HCT116 (cell line): ENCODE measurements at regions of chr5 and their contacts with region 1.

Region 1: GRCh38 chr5:149834246-149834855 is 104.2 kb downstream of the PPARGC1B start:
- DNase-seq: peak; percentile 74
- ATAC-seq: peak; percentile 65
- H3K4me3 ChIP-seq: no peak overlapping the region
- H3K27ac ChIP-seq: no peak overlapping the region
- H3K4me1 ChIP-seq: peaks cover 0 to 9% of the 10 kb centered on the region in 2 experiments; a peak in 2 of 4 replicates
- H3K27me3 ChIP-seq: no peaks in the 10 kb centered on the region
- CTCF ChIP-seq: peak; percentile 71 to 83 (median 78); a peak in 5 of 6 replicates
- POLR2A ChIP-seq: no peak
- RAD21 ChIP-seq: peak; percentile 83

Region 2: GRCh38 chr5:149636851-149637246 is 197.5 kb before region 1 on chr5:
- CTCF ChIA-PET with region 1: interaction called, 54 read pairs
- POLR2A ChIA-PET with region 1: no interaction called
- RAD21 ChIA-PET with region 1: interaction called in 1 of 2 experiments, 3 read pairs
- intact Hi-C with region 1: no loop called
- DNase-seq: peak; percentile 65
- ATAC-seq: peak; percentile 88
- H3K4me3 ChIP-seq: no peak overlapping the region
- H3K27ac ChIP-seq: no peak overlapping the region
- H3K4me1 ChIP-seq: peaks cover 16 to 35% of the 10 kb centered on the region in 2 experiments
- H3K27me3 ChIP-seq: no peaks in the 10 kb centered on the region
- CTCF ChIP-seq: peak; percentile 84 to 97 (median 94)
- POLR2A ChIP-seq: no peak
- RAD21 ChIP-seq: peak; percentile 100

Region 3: GRCh38 chr5:149960272-149961185 is 126.2 kb after region 1 on chr5 and contains the start of gene SLC26A2:
- CTCF ChIA-PET with region 1: interaction called, 26 read pairs
- POLR2A ChIA-PET with region 1: interaction called, 6 read pairs
- RAD21 ChIA-PET with region 1: interaction called, 4 to 5 read pairs
- intact Hi-C with region 1: loop called (anchors 1 kb)
- DNase-seq: peak; percentile 93
- ATAC-seq: peak; percentile 97
- H3K4me3 ChIP-seq: peak within 1 kb of the TSS; percentile 74
- H3K27ac ChIP-seq: peak within 1 kb of the TSS; percentile 52
- H3K4me1 ChIP-seq: peaks cover 8 to 27% of the 10 kb centered on the region in 2 experiments
- H3K27me3 ChIP-seq: no peaks in the 10 kb centered on the region
- CTCF ChIP-seq: no peak
- POLR2A ChIP-seq: peak; percentile 84
- RAD21 ChIP-seq: no peak
- total RNA-seq, gene SLC26A2: 7.8 TPM

Region 4: GRCh38 chr5:150122158-150122510 is 287.8 kb after region 1 on chr5:
- CTCF ChIA-PET with region 1: interaction called, 4 read pairs
- POLR2A ChIA-PET with region 1: no interaction called
- RAD21 ChIA-PET with region 1: no interaction called
- intact Hi-C with region 1: loop called (anchors 2 kb)
- DNase-seq: no peak
- ATAC-seq: peak; percentile 96
- H3K4me3 ChIP-seq: no peak overlapping the region
- H3K27ac ChIP-seq: no peak overlapping the region
- H3K4me1 ChIP-seq: peaks cover 4 to 10% of the 10 kb centered on the region in 2 experiments; a peak in 3 of 4 replicates
- H3K27me3 ChIP-seq: no peaks in the 10 kb centered on the region
- CTCF ChIP-seq: peak; percentile 58 to 68 (median 63); a peak in 5 of 6 replicates
- POLR2A ChIP-seq: no peak
- RAD21 ChIP-seq: peak; percentile 66

Region 5: GRCh38 chr5:150398722-150399523 is 564.6 kb after region 1 on chr5:
- CTCF ChIA-PET with region 1: no interaction called
- POLR2A ChIA-PET with region 1: no interaction called
- RAD21 ChIA-PET with region 1: no interaction called
- intact Hi-C with region 1: no loop called
- DNase-seq: no peak
- ATAC-seq: peak; percentile 67
- H3K4me3 ChIP-seq: no peak overlapping the region
- H3K27ac ChIP-seq: no peak overlapping the region
- H3K4me1 ChIP-seq: no peaks in the 10 kb centered on the region
- H3K27me3 ChIP-seq: no peaks in the 10 kb centered on the region
- CTCF ChIP-seq: peak in 2 of 3 experiments; percentile 17 to 48; a peak in 3 of 6 replicates
- POLR2A ChIP-seq: no peak
- RAD21 ChIP-seq: no peak